Caco-2 (cell line): ENCODE measurements at regions of chr13 and their contacts with region 1.

Region 1: GRCh38 chr13:71218960-71219359 is 648.0 kb downstream of the DACH1 start:
- DNase-seq: peak; percentile 54
- H3K4me3 ChIP-seq: no peak overlapping the region
- H3K4me3 Mint-ChIP-seq: no peak overlapping the region
- H3K27ac Mint-ChIP-seq: no peak overlapping the region
- H3K4me1 ChIP-seq: no peaks in the 10 kb centered on the region
- H3K4me1 Mint-ChIP-seq: no peaks in the 10 kb centered on the region
- H3K27me3 ChIP-seq: no peaks in the 10 kb centered on the region
- H3K27me3 Mint-ChIP-seq: no peaks in the 10 kb centered on the region
- CTCF ChIP-seq: peak; percentile 41 to 76

Region 2: GRCh38 chr13:70623239-70623638 is 595.7 kb before region 1 on chr13:
- CTCF ChIA-PET with region 1: no interaction called
- POLR2A ChIA-PET with region 1: no interaction called
- intact Hi-C with region 1: loop called (anchors 2 kb)
- DNase-seq: no peak
- H3K4me3 ChIP-seq: no peak overlapping the region
- H3K4me3 Mint-ChIP-seq: no peak overlapping the region
- H3K27ac Mint-ChIP-seq: no peak overlapping the region
- H3K4me1 ChIP-seq: no peaks in the 10 kb centered on the region
- H3K4me1 Mint-ChIP-seq: no peaks in the 10 kb centered on the region
- H3K27me3 ChIP-seq: no peaks in the 10 kb centered on the region
- H3K27me3 Mint-ChIP-seq: no peaks in the 10 kb centered on the region
- CTCF ChIP-seq: peak; percentile 28 to 32

Region 3: DNA sequence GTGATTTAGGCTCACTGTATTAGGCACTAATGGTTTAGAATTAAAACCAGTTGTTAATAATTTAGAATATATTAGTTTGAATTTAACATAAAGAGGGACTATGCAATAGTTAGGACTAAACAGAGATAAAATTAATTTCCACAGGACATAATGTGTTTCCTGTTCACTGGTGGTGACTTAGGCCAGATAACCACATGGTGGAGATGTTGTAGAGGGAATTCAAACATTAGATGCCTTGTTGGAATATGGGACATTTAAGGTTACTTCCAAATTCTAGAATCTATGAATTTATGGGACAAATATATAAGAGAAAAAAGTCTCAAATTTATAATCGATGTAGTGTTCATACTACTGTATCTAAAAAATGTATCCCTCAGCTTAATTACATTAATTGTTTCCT is 495.2 kb before region 1 on chr13:
- CTCF ChIA-PET with region 1: no interaction called
- POLR2A ChIA-PET with region 1: no interaction called
- intact Hi-C with region 1: loop called (anchors 1 kb)
- DNase-seq: no peak
- H3K4me3 ChIP-seq: no peak overlapping the region
- H3K4me3 Mint-ChIP-seq: no peak overlapping the region
- H3K27ac Mint-ChIP-seq: no peak overlapping the region
- H3K4me1 ChIP-seq: no peaks in the 10 kb centered on the region
- H3K4me1 Mint-ChIP-seq: no peaks in the 10 kb centered on the region
- H3K27me3 ChIP-seq: no peaks in the 10 kb centered on the region
- H3K27me3 Mint-ChIP-seq: no peaks in the 10 kb centered on the region
- CTCF ChIP-seq: peak; percentile 11 to 20

Region 4: DNA sequence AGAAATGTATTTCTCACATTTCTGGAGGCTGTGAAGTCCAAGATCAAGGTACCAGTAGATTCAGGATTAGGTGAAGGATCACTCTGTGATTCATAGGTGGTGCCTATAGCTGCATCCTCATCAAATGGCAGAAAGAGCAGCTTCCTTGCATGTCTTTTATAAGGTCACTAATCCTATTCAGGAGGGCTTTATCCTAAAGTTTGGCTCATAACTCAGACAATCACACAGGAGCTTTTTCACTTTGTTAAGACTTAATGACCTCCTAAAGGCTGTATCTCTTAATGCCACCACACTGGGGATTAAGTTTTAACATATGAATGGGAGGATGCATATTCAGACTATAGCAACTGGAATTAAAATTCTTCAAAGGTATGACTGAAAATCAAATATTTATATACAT is 213.0 kb before region 1 on chr13:
- CTCF ChIA-PET with region 1: interaction called, 3 read pairs
- POLR2A ChIA-PET with region 1: no interaction called
- intact Hi-C with region 1: loop called (anchors 2 kb)
- DNase-seq: no peak
- H3K4me3 ChIP-seq: no peak overlapping the region
- H3K4me3 Mint-ChIP-seq: no peak overlapping the region
- H3K27ac Mint-ChIP-seq: no peak overlapping the region
- H3K4me1 ChIP-seq: peaks cover 8% of the 10 kb centered on the region
- H3K4me1 Mint-ChIP-seq: no peaks in the 10 kb centered on the region
- H3K27me3 ChIP-seq: no peaks in the 10 kb centered on the region
- H3K27me3 Mint-ChIP-seq: no peaks in the 10 kb centered on the region
- CTCF ChIP-seq: no peak

Region 5: GRCh38 chr13:71067165-71067815 is 151.7 kb before region 1 on chr13:
- CTCF ChIA-PET with region 1: no interaction called
- POLR2A ChIA-PET with region 1: no interaction called
- intact Hi-C with region 1: loop called (anchors 1 kb)
- DNase-seq: peak in 1 of 2 experiments; percentile 28
- H3K4me3 ChIP-seq: no peak overlapping the region
- H3K4me3 Mint-ChIP-seq: no peak overlapping the region
- H3K27ac Mint-ChIP-seq: no peak overlapping the region
- H3K4me1 ChIP-seq: peaks cover 11% of the 10 kb centered on the region
- H3K4me1 Mint-ChIP-seq: no peaks in the 10 kb centered on the region
- H3K27me3 ChIP-seq: no peaks in the 10 kb centered on the region
- H3K27me3 Mint-ChIP-seq: no peaks in the 10 kb centered on the region
- CTCF ChIP-seq: peak in 1 of 2 experiments; percentile 46

Region 6: DNA sequence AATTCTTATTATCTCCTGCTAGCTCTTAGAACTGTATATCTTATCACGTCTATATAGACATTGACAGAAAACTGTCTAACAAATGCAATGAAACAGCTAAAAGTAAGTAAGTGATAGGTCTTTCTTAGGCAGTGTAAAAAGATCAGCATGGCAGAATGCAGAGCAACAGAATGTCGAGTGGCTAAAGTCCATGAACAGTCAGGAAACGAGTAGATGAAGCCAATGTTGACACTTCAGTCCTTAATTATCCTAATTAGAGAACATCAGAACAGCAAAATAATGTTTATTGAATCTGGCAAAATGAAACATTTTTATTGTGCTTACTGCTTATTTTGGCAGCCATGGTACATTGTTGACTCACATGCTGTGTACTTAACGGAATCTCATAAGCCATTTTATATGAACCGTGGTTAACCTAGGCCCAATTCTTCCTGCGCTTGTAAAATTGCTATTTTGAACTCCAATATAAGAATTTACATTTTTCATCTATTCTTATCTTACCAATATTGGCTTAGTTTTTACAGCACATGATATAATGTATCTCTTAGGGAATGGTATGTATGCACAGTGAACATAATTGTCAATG is 100.1 kb before region 1 on chr13:
- CTCF ChIA-PET with region 1: no interaction called
- POLR2A ChIA-PET with region 1: no interaction called
- intact Hi-C with region 1: no loop called
- DNase-seq: no peak
- H3K4me3 ChIP-seq: no peak overlapping the region
- H3K4me3 Mint-ChIP-seq: no peak overlapping the region
- H3K27ac Mint-ChIP-seq: no peak overlapping the region
- H3K4me1 ChIP-seq: 0 out of 2 replicates have a peak, but pooled peaks cover 8% of the 10 kb centered on the region
- H3K4me1 Mint-ChIP-seq: peaks cover 14% of the 10 kb centered on the region
- H3K27me3 ChIP-seq: no peaks in the 10 kb centered on the region
- H3K27me3 Mint-ChIP-seq: no peaks in the 10 kb centered on the region
- CTCF ChIP-seq: no peak

Region 7: GRCh38 chr13:71395053-71395452 is 176.1 kb after region 1 on chr13:
- CTCF ChIA-PET with region 1: no interaction called
- POLR2A ChIA-PET with region 1: no interaction called
- intact Hi-C with region 1: no loop called
- DNase-seq: no peak
- H3K4me3 ChIP-seq: no peak overlapping the region
- H3K4me3 Mint-ChIP-seq: no peak overlapping the region
- H3K27ac Mint-ChIP-seq: no peak overlapping the region
- H3K4me1 ChIP-seq: no peaks in the 10 kb centered on the region
- H3K4me1 Mint-ChIP-seq: no peaks in the 10 kb centered on the region
- H3K27me3 ChIP-seq: no peaks in the 10 kb centered on the region
- H3K27me3 Mint-ChIP-seq: peaks cover 6% of the 10 kb centered on the region
- CTCF ChIP-seq: no peak